ENCODE measurements at regions of chr6 and their contacts with region 1.

Region 1: DNA sequence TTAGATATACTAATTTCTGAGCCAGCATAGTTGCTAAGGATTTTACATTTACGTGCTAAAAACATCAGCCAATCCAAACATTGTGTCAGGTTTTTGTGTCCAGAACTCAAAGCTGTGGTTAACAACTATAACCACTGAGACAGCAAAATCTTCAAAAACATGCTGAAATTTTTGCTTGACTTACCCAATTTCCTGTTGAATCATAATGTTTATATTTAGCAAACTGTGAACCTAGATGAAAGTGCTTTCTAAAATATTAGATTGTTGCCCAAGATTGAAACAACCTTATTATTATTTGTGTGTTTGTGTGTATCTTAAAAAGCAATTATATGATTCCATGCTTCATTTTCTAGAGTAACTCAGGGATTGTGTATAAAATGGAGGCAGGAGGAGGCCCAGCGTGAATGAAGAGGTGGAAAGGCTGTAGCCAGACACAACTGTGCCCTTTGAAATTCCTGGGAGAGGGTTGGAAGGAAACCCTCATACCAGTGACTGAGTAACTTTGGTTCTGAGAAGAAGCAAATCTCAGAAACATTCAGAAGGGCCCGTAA is 48.0 kb downstream of the ARMC2 start:
- DNase-seq: no peak
- H3K4me3 Mint-ChIP-seq: peak overlapping the region; percentile 61
- H3K27ac Mint-ChIP-seq: peak overlapping the region; percentile 87
- H3K4me1 Mint-ChIP-seq: peaks cover 50% of the 10 kb centered on the region
- H3K27me3 Mint-ChIP-seq: peaks cover 13% of the 10 kb centered on the region

Region 2: GRCh38 chr6:108558372-108559096 is 337.7 kb before region 1 on chr6:
- intact Hi-C with region 1: loop called (anchors 1 kb)
- DNase-seq: peak; percentile 95
- H3K4me3 Mint-ChIP-seq: peak overlapping the region; percentile 88
- H3K27ac Mint-ChIP-seq: peak overlapping the region; percentile 91
- H3K4me1 Mint-ChIP-seq: peaks cover 32% of the 10 kb centered on the region
- H3K27me3 Mint-ChIP-seq: peaks cover 47% of the 10 kb centered on the region

Region 3: GRCh38 chr6:108622641-108623298 is 273.4 kb before region 1 on chr6:
- intact Hi-C with region 1: no loop called
- DNase-seq: no peak
- H3K4me3 Mint-ChIP-seq: no peak overlapping the region
- H3K27ac Mint-ChIP-seq: no peak overlapping the region
- H3K4me1 Mint-ChIP-seq: peaks cover 8% of the 10 kb centered on the region
- H3K27me3 Mint-ChIP-seq: peaks cover 4% of the 10 kb centered on the region

Region 4: DNA sequence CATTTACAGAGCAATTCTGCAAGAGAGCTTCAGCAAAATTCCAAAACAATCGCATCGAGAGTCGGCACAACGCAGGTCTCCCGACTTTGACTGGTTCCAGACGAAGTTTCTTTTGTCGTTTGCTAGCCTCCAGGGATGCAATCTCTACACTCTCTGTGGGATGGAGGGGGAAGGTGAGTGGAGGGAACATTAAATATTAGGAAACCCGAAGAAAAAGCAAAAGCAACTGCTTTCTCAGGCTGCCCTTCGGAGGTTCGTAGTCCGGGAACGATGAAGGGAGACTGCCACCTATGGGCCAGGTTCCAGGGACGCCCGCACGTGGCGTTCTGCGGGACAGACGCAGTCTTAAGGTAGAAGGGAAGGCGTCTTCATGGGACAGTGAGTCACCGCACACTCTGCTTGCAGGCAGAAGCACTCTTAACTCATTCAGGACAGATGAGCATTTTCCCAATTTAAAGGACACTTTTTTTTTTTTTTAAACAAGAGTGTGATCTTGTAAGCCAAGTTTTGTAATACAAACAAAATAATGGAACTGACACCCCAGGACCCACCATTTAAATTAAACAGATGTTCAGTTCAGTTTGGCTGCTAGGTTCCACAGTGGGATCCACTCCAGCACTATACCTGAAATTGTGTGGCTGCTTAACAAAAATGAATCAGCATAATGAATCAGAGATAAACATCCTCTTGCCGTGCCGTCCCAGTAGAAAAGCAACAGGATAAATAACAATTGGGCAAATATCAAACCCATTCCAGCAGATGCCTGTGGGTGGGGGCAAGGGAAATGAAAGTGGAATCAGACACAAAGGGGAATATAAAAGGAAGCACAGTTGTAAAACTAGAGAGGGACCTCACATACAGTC is 113.8 kb before region 1 on chr6:
- intact Hi-C with region 1: loop called (anchors 2 kb)
- DNase-seq: peak; percentile 63
- H3K4me3 Mint-ChIP-seq: peak overlapping the region; percentile 65
- H3K27ac Mint-ChIP-seq: no peak overlapping the region
- H3K4me1 Mint-ChIP-seq: peaks cover 14% of the 10 kb centered on the region
- H3K27me3 Mint-ChIP-seq: peaks cover 58% of the 10 kb centered on the region

Region 5: DNA sequence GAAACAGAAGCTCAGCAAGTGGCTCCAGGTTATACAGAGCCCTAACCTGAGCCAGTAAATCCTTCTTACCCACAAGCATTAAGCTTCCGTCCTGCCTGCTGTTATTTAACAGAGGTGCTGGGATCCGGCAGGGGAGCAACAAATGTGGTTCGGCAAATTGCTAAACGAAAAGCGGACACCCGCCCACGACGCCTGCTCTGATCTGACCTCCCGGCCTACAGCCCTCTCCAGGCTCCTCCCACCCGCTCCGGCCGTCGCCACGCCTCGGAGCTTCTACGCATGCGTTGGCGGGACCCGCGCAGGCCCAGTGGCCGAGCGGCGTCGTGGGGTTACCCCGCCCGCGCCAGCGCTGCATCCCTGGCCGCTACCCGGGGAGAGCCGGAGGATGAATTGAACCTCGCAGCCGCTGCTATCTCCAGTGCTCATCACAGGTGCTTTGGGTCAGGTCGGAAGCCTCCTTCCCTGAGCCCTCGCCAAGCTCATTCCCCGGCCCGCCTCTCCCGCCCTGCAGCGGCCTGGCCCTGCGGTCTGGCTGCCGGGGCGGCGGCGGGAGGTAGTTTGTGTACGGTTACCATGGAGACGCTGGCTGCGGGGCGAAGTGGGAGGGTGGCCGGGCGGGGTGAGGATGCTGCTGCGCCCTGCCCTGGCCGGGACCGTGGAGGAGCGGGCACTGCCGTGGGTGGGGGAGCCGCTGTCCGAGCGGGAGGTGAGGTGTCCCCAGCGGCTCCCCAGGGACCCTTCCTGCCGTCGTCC is 47.9 kb before region 1 on chr6 and contains the start of gene ARMC2:
- intact Hi-C with region 1: loop called (anchors 1 kb)
- DNase-seq: peak; percentile 88
- H3K4me3 Mint-ChIP-seq: peak within 1 kb of the TSS; percentile 89
- H3K27ac Mint-ChIP-seq: peak within 1 kb of the TSS; percentile 71
- H3K4me1 Mint-ChIP-seq: peaks cover 31% of the 10 kb centered on the region
- H3K27me3 Mint-ChIP-seq: peaks cover 25% of the 10 kb centered on the region
- total RNA-seq, gene ARMC2: 3.9 and 4.6 TPM in 2 replicates

Region 6: GRCh38 chr6:108883172-108883571 is 13.0 kb before region 1 on chr6:
- intact Hi-C with region 1: loop called (anchors 1 kb)
- DNase-seq: no peak
- H3K4me3 Mint-ChIP-seq: peak overlapping the region; percentile 56
- H3K27ac Mint-ChIP-seq: peak overlapping the region; percentile 93
- H3K4me1 Mint-ChIP-seq: peaks cover 58% of the 10 kb centered on the region
- H3K27me3 Mint-ChIP-seq: peaks cover 28% of the 10 kb centered on the region

Region 7: DNA sequence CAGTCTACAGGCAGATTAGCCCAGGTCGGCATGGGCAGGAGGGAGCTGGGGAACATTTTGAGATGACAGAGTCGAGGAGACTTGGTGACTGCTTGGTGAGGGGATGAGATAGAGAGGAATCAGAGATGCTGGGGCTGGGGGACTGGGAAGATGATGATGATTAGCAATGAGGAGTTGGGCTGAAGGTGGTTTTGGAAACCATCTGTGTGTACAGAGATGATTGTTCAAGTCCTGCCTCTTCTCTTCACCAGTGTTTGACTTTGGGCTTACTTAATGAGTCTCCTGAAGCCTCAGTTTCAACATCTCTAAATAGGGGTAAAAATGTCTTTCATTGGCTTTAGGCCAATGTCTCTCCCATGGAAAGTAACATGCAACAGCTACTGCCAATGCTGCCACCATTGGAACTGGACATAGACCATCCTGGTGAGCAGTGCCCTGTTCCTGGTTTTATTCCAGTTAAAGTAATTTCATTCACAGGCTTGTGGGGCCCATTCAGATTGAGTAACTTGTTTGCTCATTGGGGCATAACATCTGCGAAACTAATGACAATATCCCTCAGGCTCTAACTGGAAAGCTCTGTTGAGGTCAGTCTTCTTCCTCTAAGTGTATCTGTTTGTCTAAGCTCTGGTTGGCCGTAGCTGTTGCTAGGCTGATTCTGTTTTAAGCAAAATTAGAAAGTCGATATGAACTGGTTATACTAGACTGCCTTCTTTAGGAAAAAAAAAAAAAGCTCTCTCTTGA is 51.1 kb after region 1 on chr6:
- intact Hi-C with region 1: loop called (anchors 1 kb)
- DNase-seq: no peak
- H3K4me3 Mint-ChIP-seq: peak overlapping the region; percentile 53
- H3K27ac Mint-ChIP-seq: peak overlapping the region; percentile 91
- H3K4me1 Mint-ChIP-seq: peaks cover 54% of the 10 kb centered on the region
- H3K27me3 Mint-ChIP-seq: peaks cover 7% of the 10 kb centered on the region

Measured in activated T-helper 1 cell treated with anti-CD3 and anti-CD28 coated beads, Interleukin-12 subunit alpha, Interleukin-12 subunit beta, Interleukin-2, Interleukin-4 antibody, amounts not matched to agents 30 ng/mL and 10 ng/mL and 1 ng/mL, durations not matched to agents 14 hours and 24 hours and 36 hours (primary cell).